Heart right ventricle (tissue), 16 donors: ENCODE measurements at regions of chr2 and their contacts with region 1.

Region 1: GRCh38 chr2:99940963-99941362 is 201.4 kb downstream of the AFF3 start:
- DNase-seq: peak in 1 of 2 donors; percentile 10
- ATAC-seq: peak; percentile 28 to 82 (median 69)
- H3K4me3 ChIP-seq: no peak overlapping the region
- H3K27ac ChIP-seq: no peak overlapping the region
- H3K4me1 ChIP-seq: peaks cover 0 to 15% (median 8%) of the 10 kb centered on the region in 9 donors
- H3K27me3 ChIP-seq: no peaks in the 10 kb centered on the region
- CTCF ChIP-seq: no peak

Region 2: GRCh38 chr2:99836690-99837605 is 104.0 kb before region 1 on chr2:
- intact Hi-C with region 1: loop called in 1 of 10 experiments (anchors 10 kb)
- DNase-seq: no peak
- ATAC-seq: no peak
- H3K4me3 ChIP-seq: no peak overlapping the region
- H3K27ac ChIP-seq: no peak overlapping the region
- H3K4me1 ChIP-seq: no peaks in the 10 kb centered on the region
- H3K27me3 ChIP-seq: no peaks in the 10 kb centered on the region
- CTCF ChIP-seq: no peak